Activated CD4-positive, alpha-beta T cell treated with anti-CD3 and anti-CD28 coated beads for 36 hours (primary cell): ENCODE measurements at regions of chr20 and their contacts with region 1.

Region 1: GRCh38 chr20:25584905-25585704 is at the start of gene NINL:
- DNase-seq: peak; percentile 69
- ATAC-seq: peak; percentile 82
- H3K4me3 Mint-ChIP-seq: peak within 1 kb of the TSS; percentile 73
- H3K27ac Mint-ChIP-seq: peak within 1 kb of the TSS; percentile 81
- H3K4me1 Mint-ChIP-seq: peaks cover 15% of the 10 kb centered on the region
- H3K27me3 Mint-ChIP-seq: peaks cover 9% of the 10 kb centered on the region
- total RNA-seq, gene NINL: 3.3 to 4.1 TPM

Region 2: DNA sequence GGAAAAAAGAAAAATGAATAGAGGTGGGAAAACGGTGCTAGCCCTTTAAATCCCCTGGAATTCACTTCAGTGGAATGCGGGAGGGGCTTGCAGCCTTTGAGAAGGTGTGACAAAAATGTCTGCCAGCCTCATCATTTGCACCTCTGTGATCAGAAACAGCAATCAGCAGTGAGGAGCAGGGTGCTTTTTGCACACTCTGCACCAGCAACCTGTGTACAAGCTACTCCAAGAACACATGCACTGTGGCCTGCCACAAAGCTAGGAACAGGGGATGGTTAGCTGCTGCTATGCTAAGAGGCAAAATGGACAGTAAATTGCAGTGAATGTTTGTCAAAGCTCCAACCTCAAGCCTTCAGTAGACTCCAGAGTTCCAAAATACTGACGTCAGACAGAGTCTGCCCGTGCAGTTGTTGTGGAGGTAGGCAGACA is 147.9 kb before region 1 on chr20:
- CTCF ChIA-PET with region 1: no interaction called
- POLR2A ChIA-PET with region 1: no interaction called
- intact Hi-C with region 1: no loop called
- DNase-seq: no peak
- ATAC-seq: no peak
- H3K4me3 Mint-ChIP-seq: no peak overlapping the region
- H3K27ac Mint-ChIP-seq: no peak overlapping the region
- H3K4me1 Mint-ChIP-seq: no peaks in the 10 kb centered on the region
- H3K27me3 Mint-ChIP-seq: no peaks in the 10 kb centered on the region

Region 3: GRCh38 chr20:25486377-25486776 is 98.7 kb before region 1 on chr20:
- CTCF ChIA-PET with region 1: no interaction called
- POLR2A ChIA-PET with region 1: no interaction called
- intact Hi-C with region 1: loop called in 1 of 2 experiments (anchors 10 kb)
- DNase-seq: peak; percentile 13
- ATAC-seq: no peak
- H3K4me3 Mint-ChIP-seq: no peak overlapping the region
- H3K27ac Mint-ChIP-seq: no peak overlapping the region
- H3K4me1 Mint-ChIP-seq: peaks cover 28% of the 10 kb centered on the region
- H3K27me3 Mint-ChIP-seq: no peaks in the 10 kb centered on the region

Region 4: GRCh38 chr20:25623736-25624499 is 38.8 kb after region 1 on chr20 and contains the start of gene NANP:
- CTCF ChIA-PET with region 1: no interaction called
- POLR2A ChIA-PET with region 1: no interaction called
- intact Hi-C with region 1: loop called (anchors 1 to 5 kb)
- DNase-seq: peak; percentile 95
- ATAC-seq: peak; percentile 87
- H3K4me3 Mint-ChIP-seq: peak within 1 kb of the TSS; percentile 80
- H3K27ac Mint-ChIP-seq: peak within 1 kb of the TSS; percentile 95
- H3K4me1 Mint-ChIP-seq: peaks cover 21% of the 10 kb centered on the region
- H3K27me3 Mint-ChIP-seq: no peaks in the 10 kb centered on the region
- total RNA-seq, gene NANP: 6.1 to 8.3 TPM

Region 5: DNA sequence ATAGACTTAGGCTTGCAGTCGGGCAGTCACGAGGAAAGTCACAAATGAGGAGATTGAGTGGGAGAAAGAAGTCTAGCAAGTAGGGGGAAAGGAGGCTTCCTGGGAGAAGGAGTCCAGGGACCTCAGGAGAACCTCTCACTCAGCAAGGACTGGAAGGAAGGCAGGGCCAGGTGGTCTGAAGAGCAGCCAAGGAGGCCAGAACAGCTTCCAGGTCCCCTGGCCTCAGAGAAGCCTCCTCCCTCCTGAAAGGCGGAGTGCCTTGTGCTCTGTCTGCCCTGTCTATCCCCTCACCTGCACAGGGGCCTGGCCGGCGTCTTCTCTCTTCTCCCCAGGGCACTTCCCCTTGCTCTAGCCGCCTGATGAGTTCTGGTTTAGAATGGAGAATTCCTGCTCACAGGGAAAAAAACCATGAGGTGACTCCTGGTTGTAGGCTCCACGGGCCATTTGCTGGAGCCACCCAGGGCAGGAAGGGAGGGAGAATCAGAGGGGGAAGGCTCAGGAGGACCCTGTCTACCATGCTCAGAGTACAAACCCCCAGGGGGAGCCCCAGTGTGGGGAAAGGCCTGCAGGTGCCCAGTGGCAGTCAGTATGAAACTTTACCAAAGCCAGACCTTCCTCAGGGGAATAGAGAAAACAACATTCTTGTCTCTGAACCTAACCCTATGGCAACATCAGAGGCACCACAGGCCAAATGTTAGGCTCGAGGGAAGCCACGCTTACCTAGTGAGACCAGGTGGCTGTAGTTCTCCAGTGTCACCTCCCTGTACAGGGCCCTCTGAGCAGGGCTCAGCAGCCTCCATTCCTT is 100.4 kb after region 1 on chr20:
- CTCF ChIA-PET with region 1: no interaction called
- POLR2A ChIA-PET with region 1: no interaction called
- intact Hi-C with region 1: no loop called
- DNase-seq: no peak
- ATAC-seq: no peak
- H3K4me3 Mint-ChIP-seq: no peak overlapping the region
- H3K27ac Mint-ChIP-seq: no peak overlapping the region
- H3K4me1 Mint-ChIP-seq: peaks cover 4% of the 10 kb centered on the region
- H3K27me3 Mint-ChIP-seq: no peaks in the 10 kb centered on the region